ENCODE measurements at regions of chr15 and their contacts with region 1.

Region 1: GRCh38 chr15:84955089-84955848 is 26.4 kb upstream of the PDE8A start:
- DNase-seq: peak; percentile 48
- H3K4me3 Mint-ChIP-seq: no peak overlapping the region
- H3K27ac Mint-ChIP-seq: no peak overlapping the region
- H3K4me1 Mint-ChIP-seq: peaks cover 4% of the 10 kb centered on the region
- H3K27me3 Mint-ChIP-seq: peaks cover 44% of the 10 kb centered on the region

Region 2: DNA sequence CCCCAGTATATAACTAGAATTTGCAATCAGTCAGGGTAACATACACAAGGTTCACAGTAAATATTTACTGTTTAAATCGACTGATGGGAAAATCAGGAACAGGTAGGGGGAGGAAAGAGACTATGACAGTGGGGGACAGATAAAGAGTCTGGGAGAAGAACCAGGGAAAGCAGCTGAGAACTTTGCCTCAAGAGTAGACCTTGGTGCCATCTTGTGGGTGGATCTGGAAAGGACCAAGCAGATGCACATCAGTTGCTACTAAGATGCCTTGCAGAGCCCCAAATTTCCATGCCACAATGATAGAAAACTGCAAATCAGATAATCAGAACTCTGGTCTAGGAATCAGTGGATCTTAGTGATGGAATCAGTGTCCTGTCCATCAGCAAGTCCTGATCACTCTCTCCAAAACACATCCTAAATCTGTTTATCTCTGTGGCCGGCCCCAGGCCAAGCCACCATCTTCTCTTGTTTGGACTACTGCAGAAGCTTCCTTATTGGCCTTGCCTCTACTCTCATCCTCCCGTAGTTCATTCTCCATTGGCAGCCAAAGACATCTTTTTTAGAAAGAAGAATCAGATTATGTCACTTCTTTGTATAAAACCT is 89.1 kb after region 1 on chr15:
- CTCF ChIA-PET with region 1: interaction called, 10 read pairs
- DNase-seq: peak; percentile 64
- H3K4me3 Mint-ChIP-seq: no peak overlapping the region
- H3K27ac Mint-ChIP-seq: no peak overlapping the region
- H3K4me1 Mint-ChIP-seq: peaks cover 17% of the 10 kb centered on the region
- H3K27me3 Mint-ChIP-seq: no peaks in the 10 kb centered on the region

Region 3: DNA sequence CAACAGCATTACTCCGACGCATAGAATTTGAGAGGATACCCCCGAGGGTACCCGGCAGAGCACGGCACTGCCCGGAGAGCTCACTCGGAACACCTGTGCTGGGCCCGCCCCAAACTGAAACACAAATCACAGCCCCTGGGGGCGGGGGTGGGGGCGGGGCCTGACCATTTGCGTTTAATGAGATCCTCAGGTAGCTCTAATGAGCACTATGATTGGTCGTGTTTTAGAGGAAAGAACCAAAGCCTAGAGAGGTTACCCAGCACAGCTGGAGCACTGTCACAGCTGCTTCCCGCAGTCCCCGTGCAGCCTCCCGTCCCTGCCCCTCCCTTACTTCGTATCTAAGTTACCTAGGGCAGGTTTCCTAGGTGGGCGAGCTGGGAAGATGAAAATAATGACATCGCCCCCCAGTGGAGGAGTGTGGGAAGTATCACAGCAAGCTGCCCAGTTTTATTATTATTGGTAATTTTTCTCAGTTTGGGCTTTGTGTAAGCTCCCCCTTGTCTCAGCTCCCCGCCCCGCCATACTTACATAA is 213.4 kb after region 1 on chr15:
- CTCF ChIA-PET with region 1: interaction called, 10 read pairs
- DNase-seq: peak; percentile 52
- H3K4me3 Mint-ChIP-seq: no peak overlapping the region
- H3K27ac Mint-ChIP-seq: no peak overlapping the region
- H3K4me1 Mint-ChIP-seq: no peaks in the 10 kb centered on the region
- H3K27me3 Mint-ChIP-seq: peaks cover 46% of the 10 kb centered on the region